A549 (cell line): ENCODE measurements at regions of chr16 and their contacts with region 1.

Region 1: GRCh38 chr16:48526058-48526957 is 83.7 kb downstream of the N4BP1 start:
- DNase-seq: peak; percentile 44 to 69
- ATAC-seq: peak; percentile 84 to 89
- H3K4me3 ChIP-seq: no peak overlapping the region
- H3K27ac ChIP-seq: peak overlapping the region; percentile 27 to 31; a peak in 2 of 6 replicates
- H3K4me1 ChIP-seq: peaks cover 12% of the 10 kb centered on the region
- CTCF ChIP-seq: peak; percentile 60
- EP300 ChIP-seq: no peak
- POLR2A ChIP-seq: no peak
- RAD21 ChIP-seq: peak; percentile 84 to 89

Region 2: DNA sequence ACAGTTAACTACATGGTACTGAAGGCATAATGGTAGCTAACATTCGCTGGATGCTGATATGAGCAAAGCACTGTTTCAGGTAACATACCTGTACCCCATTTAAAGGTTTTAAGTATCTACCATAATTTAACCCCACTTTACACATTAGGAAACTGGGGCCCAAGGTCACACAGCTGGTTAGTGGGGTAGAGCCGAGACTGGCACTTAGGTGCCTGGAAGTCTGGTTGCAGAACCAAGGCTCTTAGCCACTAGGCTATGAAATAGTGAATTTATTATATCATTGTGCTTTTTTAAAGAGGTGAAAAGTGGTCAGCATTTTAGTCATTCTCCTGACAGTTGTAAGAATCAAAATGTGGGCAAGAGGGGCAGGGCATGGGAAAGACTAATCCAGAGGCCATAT is 166.3 kb before region 1 on chr16:
- CTCF ChIA-PET with region 1: interaction called, 26 read pairs
- POLR2A ChIA-PET with region 1: no interaction called
- DNase-seq: no peak
- ATAC-seq: no peak
- H3K4me3 ChIP-seq: no peak overlapping the region
- H3K27ac ChIP-seq: no peak overlapping the region
- H3K4me1 ChIP-seq: peaks cover 8% of the 10 kb centered on the region
- CTCF ChIP-seq: no peak
- EP300 ChIP-seq: no peak
- POLR2A ChIP-seq: no peak
- RAD21 ChIP-seq: no peak

Region 3: DNA sequence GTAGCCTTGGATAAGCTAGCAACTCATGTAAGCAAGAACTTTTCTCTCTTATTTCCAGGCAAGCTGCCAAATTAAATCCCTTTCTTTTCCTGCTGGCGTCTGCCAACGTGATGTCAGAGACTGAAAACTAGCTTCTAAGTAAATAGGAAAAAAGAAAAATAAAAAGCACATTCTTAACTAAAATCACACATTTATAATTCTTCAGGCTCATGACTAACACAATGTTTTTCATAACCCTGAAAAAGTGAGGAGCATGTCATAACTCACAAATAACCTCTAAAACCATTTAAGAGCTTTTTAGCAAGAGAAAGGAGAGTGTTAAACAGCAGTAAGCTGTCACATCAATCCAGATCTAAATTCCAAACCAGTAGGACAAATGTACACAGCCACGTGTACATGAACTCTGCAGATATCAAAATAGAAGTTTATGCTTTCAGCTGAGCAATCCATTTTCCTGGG is 26.4 kb before region 1 on chr16:
- CTCF ChIA-PET with region 1: no interaction called
- POLR2A ChIA-PET with region 1: no interaction called
- DNase-seq: peak in 1 of 2 experiments; percentile 77
- ATAC-seq: peak in 1 of 2 experiments; percentile 51; a peak in 2 of 6 replicates
- H3K4me3 ChIP-seq: no peak overlapping the region
- H3K27ac ChIP-seq: peak overlapping the region; percentile 14 to 67; a peak in 5 of 6 replicates
- H3K4me1 ChIP-seq: peaks cover 24% of the 10 kb centered on the region
- CTCF ChIP-seq: no peak
- EP300 ChIP-seq: no peak
- POLR2A ChIP-seq: no peak
- RAD21 ChIP-seq: no peak